Posterior cingulate gyrus (tissue), 11 donors: ENCODE measurements at regions of chr22 and their contacts with region 1.

Region 1: GRCh38 chr22:36977947-36978660 is 41.1 kb downstream of the TST start:
- DNase-seq: peak; percentile 79 to 98 (median 90)

Region 2: GRCh38 chr22:36671404-36671803 is 306.7 kb before region 1 on chr22:
- intact Hi-C with region 1: no loop called
- DNase-seq: no peak

Region 3: GRCh38 chr22:36781656-36782627 is 196.2 kb before region 1 on chr22:
- intact Hi-C with region 1: loop called (anchors 1 kb)
- DNase-seq: peak; percentile 62 to 97 (median 82)

Region 4: GRCh38 chr22:36856121-36856791 is 121.8 kb before region 1 on chr22:
- intact Hi-C with region 1: loop called (anchors 2 kb)
- DNase-seq: peak; percentile 80 to 99 (median 94)

Region 5: DNA sequence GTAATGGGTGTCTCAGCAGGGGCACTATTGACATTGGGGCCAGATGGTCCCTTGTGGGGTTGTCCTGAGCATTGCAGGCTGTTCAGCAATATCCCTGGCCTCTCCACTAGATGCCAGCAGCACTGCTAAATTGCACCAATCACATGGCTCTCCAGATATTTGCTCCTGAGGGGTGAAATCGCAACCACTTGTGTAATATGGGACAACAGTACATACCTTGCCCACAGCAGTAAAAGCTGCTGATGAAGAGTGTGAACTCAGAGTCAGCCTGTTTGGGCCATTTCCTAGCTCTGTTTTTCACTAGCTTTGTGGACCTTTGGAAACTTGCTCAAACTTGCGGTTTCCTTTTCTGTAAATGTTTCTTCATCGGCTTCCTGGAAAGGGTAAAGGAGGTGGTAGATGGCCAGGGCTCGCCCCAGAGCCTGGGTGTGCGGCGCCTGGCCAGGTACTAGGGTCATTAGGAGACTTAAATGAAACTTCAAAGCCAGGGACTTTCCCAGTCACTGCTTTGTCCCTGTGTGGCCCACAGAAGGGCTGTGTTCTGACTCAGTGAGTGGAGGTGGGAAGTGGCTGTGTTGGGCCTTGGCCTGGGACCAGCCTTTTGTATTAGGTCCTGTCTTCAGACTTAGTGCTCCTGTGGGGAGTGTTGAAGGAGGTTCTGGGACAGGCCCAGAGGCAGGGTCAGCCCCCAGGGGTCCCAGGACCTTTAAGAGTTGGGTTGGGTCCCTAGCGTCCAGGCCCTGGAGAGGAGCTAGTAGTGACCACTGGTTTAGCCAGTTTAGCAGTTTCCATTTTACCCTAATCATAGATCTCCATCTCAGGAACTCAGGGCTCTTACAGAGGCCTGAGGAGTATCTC is 104.2 kb before region 1 on chr22:
- intact Hi-C with region 1: loop called (anchors 5 kb)
- DNase-seq: peak in 2 of 10 donors; percentile 23 to 61

Region 6: DNA sequence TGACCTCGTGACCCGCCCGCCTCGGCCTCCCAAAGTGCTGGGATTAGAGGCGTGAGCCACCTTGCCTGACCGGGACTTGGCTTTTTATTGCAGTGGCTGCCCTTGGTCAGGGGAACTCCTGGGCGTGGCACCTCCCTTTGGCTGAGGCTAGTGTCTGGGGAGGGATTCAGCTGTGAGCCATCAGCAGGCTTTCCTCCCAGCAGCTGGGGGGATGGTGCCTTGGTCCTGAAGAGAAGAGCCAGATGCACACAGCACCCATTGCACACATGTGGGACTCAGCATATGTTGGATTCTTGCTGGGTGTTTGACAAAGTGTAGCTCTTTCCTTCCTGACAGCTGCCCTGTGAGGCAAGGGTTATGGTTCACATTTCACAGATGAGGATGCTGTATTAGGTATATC is 312.6 kb after region 1 on chr22:
- intact Hi-C with region 1: no loop called
- DNase-seq: no peak

Region 7: GRCh38 chr22:37303821-37304274 is 325.7 kb after region 1 on chr22:
- intact Hi-C with region 1: no loop called
- DNase-seq: peak in 3 of 10 donors; percentile 48 to 90 (median 78)